Colonic mucosa (tissue), 4 donors: ENCODE measurements at regions of chr6 and their contacts with region 1.

Region 1: GRCh38 chr6:125153391-125154117 is at the start of gene TPD52L1:
- DNase-seq: peak; percentile 86
- H3K4me3 ChIP-seq: peak within 1 kb of the TSS; percentile 47
- H3K27ac ChIP-seq: peak within 1 kb of the TSS; percentile 34
- H3K4me1 ChIP-seq: no peaks in the 10 kb centered on the region
- H3K27me3 ChIP-seq: no peaks in the 10 kb centered on the region
- CTCF ChIP-seq: peak; percentile 75
- total RNA-seq, gene TPD52L1: 15.5 to 16.9 TPM

Region 2: DNA sequence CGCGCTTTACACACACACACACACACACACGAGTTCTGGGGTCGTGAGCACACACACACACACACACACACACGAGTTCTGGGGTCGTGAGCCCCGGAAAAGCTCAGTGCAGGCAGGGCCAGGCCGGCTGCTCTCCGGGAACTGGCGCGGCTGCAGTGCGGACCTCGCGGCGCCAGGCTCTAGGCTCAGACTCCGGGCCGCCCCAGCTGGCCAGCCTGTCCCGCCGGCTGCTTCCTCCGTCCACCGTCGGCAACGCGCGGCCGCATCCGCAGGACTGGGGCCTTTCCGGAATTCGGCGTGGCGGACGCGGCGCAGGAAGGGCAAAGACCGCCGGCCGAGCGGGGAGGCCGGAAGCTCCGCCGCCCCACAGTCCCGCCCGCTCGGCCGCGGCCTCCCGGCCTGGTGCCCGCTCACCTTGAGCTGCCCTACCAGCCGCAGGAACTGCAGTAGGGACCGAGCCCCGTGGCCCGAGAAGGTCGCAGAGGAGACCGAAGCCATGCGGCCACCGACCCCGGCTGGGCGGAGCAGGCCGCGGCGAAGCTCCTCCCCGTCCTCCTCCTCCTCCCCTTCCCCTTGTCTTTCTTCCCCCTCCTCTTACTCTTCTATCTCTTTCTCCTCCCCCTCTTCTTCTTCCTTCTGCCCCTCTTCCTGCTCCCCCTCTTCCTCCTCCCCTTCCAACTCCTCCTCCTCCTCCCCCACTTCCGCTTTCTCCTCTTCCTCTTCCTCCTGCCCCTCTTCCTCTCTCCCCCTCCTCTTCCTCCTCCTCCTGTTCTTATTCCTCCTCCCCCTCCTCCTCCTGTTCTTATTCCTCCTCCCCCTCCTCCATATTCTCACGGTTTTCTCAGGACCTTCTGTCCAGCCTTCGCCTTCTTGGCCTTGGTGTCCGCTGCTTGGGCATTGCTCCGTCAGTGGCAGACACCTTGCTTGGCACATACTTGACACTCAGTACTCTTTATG is 148.2 kb after region 1 on chr6 and contains the start of gene HDDC2:
- intact Hi-C with region 1: loop called (anchors 5 kb)
- DNase-seq: peak; percentile 70
- H3K4me3 ChIP-seq: peak within 1 kb of the TSS; percentile 54
- H3K27ac ChIP-seq: peak within 1 kb of the TSS; percentile 77
- H3K4me1 ChIP-seq: peaks cover 8% of the 10 kb centered on the region
- H3K27me3 ChIP-seq: no peaks in the 10 kb centered on the region
- CTCF ChIP-seq: no peak
- total RNA-seq, gene HDDC2: 39.4 to 44.8 TPM

Region 3: GRCh38 chr6:125753218-125753936 is 599.8 kb after region 1 on chr6:
- intact Hi-C with region 1: loop called (anchors 10 kb)
- DNase-seq: no peak
- H3K4me3 ChIP-seq: no peak overlapping the region
- H3K27ac ChIP-seq: no peak overlapping the region
- H3K4me1 ChIP-seq: peaks cover 5% of the 10 kb centered on the region
- H3K27me3 ChIP-seq: peaks cover 37% of the 10 kb centered on the region
- CTCF ChIP-seq: no peak